Activated naive CD4-positive, alpha-beta T cell treated with anti-CD3 and anti-CD28 coated beads for 36 hours (primary cell): ENCODE measurements at regions of chr9 and their contacts with region 1.

Region 1: DNA sequence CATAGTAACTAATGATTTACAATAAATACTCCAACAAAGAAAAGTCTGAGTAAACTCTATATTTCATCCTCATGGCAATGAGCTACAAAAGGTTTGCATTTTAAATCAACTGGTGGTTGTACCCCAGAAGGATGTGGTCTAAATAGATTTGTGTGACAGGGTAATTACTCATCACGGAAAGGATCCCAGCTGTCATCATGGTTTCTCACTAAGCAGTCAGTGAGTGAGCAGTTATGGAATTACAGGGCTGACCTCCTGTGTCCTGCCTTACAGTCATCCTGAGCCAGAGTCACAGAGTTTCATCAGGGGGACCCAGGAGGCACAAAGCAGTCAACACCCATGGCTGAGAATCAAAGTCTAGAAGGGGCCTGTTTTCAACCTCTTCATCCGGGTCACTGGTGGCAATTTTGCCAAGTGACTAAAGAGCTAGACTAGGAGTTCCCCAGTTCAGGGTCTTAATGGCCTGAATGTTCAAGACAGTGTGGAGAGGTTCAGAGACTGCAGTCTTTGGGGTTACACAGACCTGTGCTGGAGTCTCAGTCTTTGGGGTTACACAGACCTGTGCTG is 210.7 kb upstream of the SLC24A2 start:
- DNase-seq: peak; percentile 85
- H3K4me3 Mint-ChIP-seq: no peak overlapping the region
- H3K27ac Mint-ChIP-seq: peak overlapping the region; percentile 85
- H3K4me1 Mint-ChIP-seq: peaks cover 43% of the 10 kb centered on the region
- H3K27me3 Mint-ChIP-seq: no peaks in the 10 kb centered on the region

Region 2: GRCh38 chr9:18768951-18769622 is 1230.5 kb before region 1 on chr9:
- CTCF ChIA-PET with region 1: no interaction called
- intact Hi-C with region 1: no loop called
- DNase-seq: no peak
- H3K4me3 Mint-ChIP-seq: no peak overlapping the region
- H3K27ac Mint-ChIP-seq: no peak overlapping the region
- H3K4me1 Mint-ChIP-seq: no peaks in the 10 kb centered on the region
- H3K27me3 Mint-ChIP-seq: peaks cover 13% of the 10 kb centered on the region

Region 3: GRCh38 chr9:19230356-19231125 is 769.0 kb before region 1 on chr9 and contains the start of gene DENND4C:
- CTCF ChIA-PET with region 1: no interaction called
- intact Hi-C with region 1: loop called (anchors 5 kb)
- DNase-seq: peak; percentile 78
- H3K4me3 Mint-ChIP-seq: peak within 1 kb of the TSS; percentile 67
- H3K27ac Mint-ChIP-seq: no peak within 1 kb of the TSS
- H3K4me1 Mint-ChIP-seq: peaks cover 15% of the 10 kb centered on the region
- H3K27me3 Mint-ChIP-seq: no peaks in the 10 kb centered on the region
- total RNA-seq, gene DENND4C: 8.7 to 9.0 TPM

Region 4: GRCh38 chr9:19976226-19976625 is 23.3 kb before region 1 on chr9:
- CTCF ChIA-PET with region 1: interaction called, 3 read pairs
- intact Hi-C with region 1: loop called (anchors 1 kb)
- DNase-seq: peak; percentile 69
- H3K4me3 Mint-ChIP-seq: no peak overlapping the region
- H3K27ac Mint-ChIP-seq: peak overlapping the region; percentile 83
- H3K4me1 Mint-ChIP-seq: peaks cover 28% of the 10 kb centered on the region
- H3K27me3 Mint-ChIP-seq: no peaks in the 10 kb centered on the region

Region 5: DNA sequence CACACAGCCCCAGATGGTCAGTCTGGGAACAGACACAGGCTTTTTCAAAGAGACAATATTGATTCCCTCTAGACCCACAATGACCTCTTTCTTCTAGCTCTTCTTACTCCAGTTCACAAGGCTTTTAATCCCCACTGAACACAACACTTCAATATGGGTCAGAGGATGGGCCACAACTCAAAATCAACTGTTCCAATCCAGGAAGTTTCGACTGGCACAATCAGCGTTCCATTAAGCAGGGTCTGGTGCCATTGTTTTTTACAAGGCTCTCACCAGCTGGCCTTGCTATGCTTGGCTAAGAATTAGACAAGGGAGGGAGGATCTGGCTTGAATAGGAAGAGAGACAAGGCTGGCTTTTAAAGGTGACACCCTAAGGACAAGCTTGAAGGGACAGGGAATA is 11.3 kb before region 1 on chr9:
- CTCF ChIA-PET with region 1: no interaction called
- intact Hi-C with region 1: no loop called
- DNase-seq: no peak
- H3K4me3 Mint-ChIP-seq: no peak overlapping the region
- H3K27ac Mint-ChIP-seq: no peak overlapping the region
- H3K4me1 Mint-ChIP-seq: peaks cover 15% of the 10 kb centered on the region
- H3K27me3 Mint-ChIP-seq: no peaks in the 10 kb centered on the region

Region 6: DNA sequence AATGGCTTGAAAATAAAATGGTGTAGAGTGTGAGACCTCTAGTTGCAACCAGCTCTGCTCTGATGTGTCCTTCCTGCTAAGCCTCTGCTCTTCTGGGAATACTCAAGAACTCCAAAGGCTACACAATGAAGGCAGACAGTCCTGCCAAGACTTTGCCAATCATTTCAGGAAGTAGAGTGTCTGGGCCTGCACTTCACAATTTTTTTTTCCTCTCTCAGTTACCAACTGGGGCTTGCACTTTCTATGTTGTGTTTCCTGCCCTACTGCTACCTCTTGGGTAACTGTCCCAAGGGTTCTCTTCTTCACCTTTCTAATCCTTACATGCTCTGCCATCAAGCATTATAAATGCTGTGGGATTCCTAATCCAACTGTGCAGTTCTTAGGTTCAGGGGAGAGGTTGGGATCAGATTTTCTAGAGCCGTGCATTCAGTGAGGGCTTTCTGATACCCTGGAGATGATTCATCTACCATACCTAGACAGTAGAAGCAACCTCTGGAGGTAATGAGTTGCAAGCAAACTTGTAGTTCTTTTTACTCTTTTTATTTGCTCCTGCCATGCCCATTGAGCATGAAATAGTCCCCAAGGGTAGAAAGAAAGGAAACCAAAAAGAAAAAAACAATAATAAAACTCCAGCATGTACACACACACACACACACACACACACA is 256.8 kb after region 1 on chr9:
- CTCF ChIA-PET with region 1: no interaction called
- intact Hi-C with region 1: loop called (anchors 2 kb)
- DNase-seq: no peak
- H3K4me3 Mint-ChIP-seq: no peak overlapping the region
- H3K27ac Mint-ChIP-seq: no peak overlapping the region
- H3K4me1 Mint-ChIP-seq: peaks cover 38% of the 10 kb centered on the region
- H3K27me3 Mint-ChIP-seq: no peaks in the 10 kb centered on the region

Region 7: GRCh38 chr9:20558566-20559016 is 559.0 kb after region 1 on chr9:
- CTCF ChIA-PET with region 1: no interaction called
- intact Hi-C with region 1: loop called (anchors 2 kb)
- DNase-seq: peak; percentile 70
- H3K4me3 Mint-ChIP-seq: peak overlapping the region; percentile 36
- H3K27ac Mint-ChIP-seq: peak overlapping the region; percentile 59
- H3K4me1 Mint-ChIP-seq: peaks cover 86% of the 10 kb centered on the region
- H3K27me3 Mint-ChIP-seq: no peaks in the 10 kb centered on the region

Region 8: DNA sequence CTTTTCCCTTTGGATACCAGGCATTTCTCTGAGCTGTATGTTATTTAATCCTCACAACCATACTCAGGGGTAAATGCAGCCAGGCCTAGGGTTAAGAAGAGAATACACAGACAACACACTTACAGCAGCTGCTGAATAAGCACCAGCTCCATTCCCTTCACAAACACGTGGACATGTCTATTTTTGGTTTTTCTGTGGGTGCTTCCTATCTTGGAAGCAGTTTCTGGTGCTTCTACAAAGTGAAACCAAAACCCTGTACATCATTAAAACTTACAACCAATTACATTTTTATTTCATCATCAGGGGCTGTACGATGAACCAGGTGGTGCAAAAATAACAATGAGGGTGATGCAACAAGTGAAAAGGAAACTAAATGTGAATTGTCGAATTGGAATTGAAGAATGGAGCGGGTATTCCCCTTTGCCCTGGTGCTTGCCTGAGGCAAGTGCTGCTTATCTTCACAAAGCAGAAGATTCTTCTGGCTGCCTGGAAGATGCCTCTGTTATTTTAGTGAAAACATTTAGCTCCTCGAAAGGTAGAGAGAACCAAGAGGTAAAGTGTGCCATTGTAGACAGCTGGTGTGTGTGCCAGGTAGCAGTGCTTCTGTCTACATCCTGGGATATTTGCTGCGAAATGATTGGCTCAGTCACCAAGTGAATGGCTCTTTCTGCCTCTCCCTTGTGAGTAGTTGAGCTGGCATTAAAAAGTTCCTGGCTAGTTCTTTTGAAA is 1096.8 kb after region 1 on chr9:
- CTCF ChIA-PET with region 1: no interaction called
- intact Hi-C with region 1: loop called (anchors 1 kb)
- DNase-seq: peak; percentile 67
- H3K4me3 Mint-ChIP-seq: peak overlapping the region; percentile 76
- H3K27ac Mint-ChIP-seq: peak overlapping the region; percentile 94
- H3K4me1 Mint-ChIP-seq: peaks cover 39% of the 10 kb centered on the region
- H3K27me3 Mint-ChIP-seq: no peaks in the 10 kb centered on the region